ENCODE measurements at regions of chr20 and their contacts with region 1.

Region 1: DNA sequence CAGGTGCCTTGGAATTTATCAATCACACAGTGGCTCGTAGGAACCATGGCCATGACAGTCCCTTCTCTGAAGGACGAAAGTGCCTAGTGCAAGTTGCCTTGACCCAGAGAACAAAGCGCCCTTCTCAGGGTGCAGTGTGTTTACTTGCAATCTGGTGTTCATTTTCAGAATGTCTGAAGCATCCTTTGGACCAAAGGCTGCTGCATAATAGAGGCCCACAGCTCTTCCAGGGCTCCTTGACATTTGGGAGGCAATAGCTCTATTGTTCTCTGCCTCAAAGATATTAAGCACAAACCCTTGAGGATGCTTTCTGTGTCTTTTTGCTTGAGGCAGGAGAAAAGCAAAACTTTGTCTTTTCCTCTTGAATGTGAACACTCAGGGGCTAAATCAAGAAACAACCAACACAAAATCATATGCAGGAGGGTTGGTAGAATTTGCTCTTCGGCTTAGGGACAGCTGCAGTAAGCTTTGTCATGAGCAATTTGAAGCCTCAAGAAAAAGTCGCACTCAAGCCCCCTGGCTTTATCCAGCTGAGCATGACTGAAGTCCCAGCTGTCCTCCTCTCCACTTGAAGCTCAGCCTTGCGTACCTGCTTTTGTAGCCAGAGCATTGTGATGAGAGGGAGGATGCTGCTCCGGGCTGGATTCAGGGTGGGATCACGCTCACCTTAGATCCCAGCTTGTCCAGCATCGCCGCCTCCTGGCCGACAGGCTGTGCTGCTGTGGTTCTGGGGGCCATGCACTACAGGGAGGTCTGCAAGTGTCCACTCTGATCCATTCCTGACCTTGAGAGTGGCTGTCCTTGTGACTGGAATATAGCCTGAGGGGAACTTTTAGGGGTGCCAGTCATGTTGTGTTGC is 495.4 kb downstream of the CDH26 start:
- DNase-seq: peak; percentile 65
- ATAC-seq: peak; percentile 80
- H3K4me3 Mint-ChIP-seq: no peak overlapping the region
- H3K27ac Mint-ChIP-seq: no peak overlapping the region
- H3K4me1 Mint-ChIP-seq: peaks cover 5% of the 10 kb centered on the region; the same call in 1 of the 2 replicates
- H3K27me3 Mint-ChIP-seq: peaks cover 21% of the 10 kb centered on the region
- CTCF ChIP-seq: no peak

Region 2: GRCh38 chr20:60372822-60373221 is 80.8 kb before region 1 on chr20:
- CTCF ChIA-PET with region 1: interaction called, 15 read pairs
- POLR2A ChIA-PET with region 1: no interaction called
- DNase-seq: no peak
- ATAC-seq: no peak
- H3K4me3 Mint-ChIP-seq: no peak overlapping the region
- H3K27ac Mint-ChIP-seq: no peak overlapping the region
- H3K4me1 Mint-ChIP-seq: no peaks in the 10 kb centered on the region; the same call in 1 of the 2 replicates
- H3K27me3 Mint-ChIP-seq: peaks cover 44% of the 10 kb centered on the region
- CTCF ChIP-seq: no peak

Region 3: GRCh38 chr20:60695226-60696000 is 241.8 kb after region 1 on chr20:
- CTCF ChIA-PET with region 1: no interaction called
- POLR2A ChIA-PET with region 1: no interaction called
- DNase-seq: no peak
- ATAC-seq: no peak
- H3K4me3 Mint-ChIP-seq: no peak overlapping the region
- H3K27ac Mint-ChIP-seq: no peak overlapping the region
- H3K4me1 Mint-ChIP-seq: peaks cover 63% of the 10 kb centered on the region
- H3K27me3 Mint-ChIP-seq: peaks cover 9% of the 10 kb centered on the region
- CTCF ChIP-seq: no peak